Ascending aorta (tissue), 2 donors: ENCODE measurements at regions of chr16 and their contacts with region 1.

Region 1: GRCh38 chr16:2429034-2429770 is at the start of gene CCNF:
- DNase-seq: peak; percentile 88 to 98
- H3K4me3 ChIP-seq: peak within 1 kb of the TSS; percentile 57 to 93
- H3K27ac ChIP-seq: peak within 1 kb of the TSS; percentile 57 to 68
- H3K4me1 ChIP-seq: peaks cover 3 to 7% of the 10 kb centered on the region in 2 donors
- H3K27me3 ChIP-seq: no peaks in the 10 kb centered on the region
- CTCF ChIP-seq: peak in 1 of 3 experiments; percentile 38
- total RNA-seq, gene CCNF: 0.43 TPM

Region 2: GRCh38 chr16:2267913-2268666 is 161.1 kb before region 1 on chr16 and contains the start of gene RNPS1:
- intact Hi-C with region 1: loop called (anchors 10 kb)
- DNase-seq: peak; percentile 77 to 98
- H3K4me3 ChIP-seq: peak within 1 kb of the TSS; percentile 63 to 92
- H3K27ac ChIP-seq: peak within 1 kb of the TSS; percentile 95 to 98
- H3K4me1 ChIP-seq: peaks cover 10 to 21% of the 10 kb centered on the region in 2 donors
- H3K27me3 ChIP-seq: no peaks in the 10 kb centered on the region
- CTCF ChIP-seq: no peak
- total RNA-seq, gene RNPS1: 134 TPM

Region 3: GRCh38 chr16:2340564-2341455 is 88.4 kb before region 1 on chr16 and contains the start of gene ABCA3:
- intact Hi-C with region 1: loop called (anchors 1 kb)
- DNase-seq: peak; percentile 59 to 95
- H3K4me3 ChIP-seq: peak within 1 kb of the TSS; percentile 62 to 89
- H3K27ac ChIP-seq: peak within 1 kb of the TSS in 1 of 2 donors; percentile 32
- H3K4me1 ChIP-seq: peaks cover 0 to 11% of the 10 kb centered on the region in 2 donors
- H3K27me3 ChIP-seq: no peaks in the 10 kb centered on the region
- CTCF ChIP-seq: peak; percentile 99 to 100 (median 100)
- total RNA-seq, gene ABCA3: 25.9 TPM

Region 4: DNA sequence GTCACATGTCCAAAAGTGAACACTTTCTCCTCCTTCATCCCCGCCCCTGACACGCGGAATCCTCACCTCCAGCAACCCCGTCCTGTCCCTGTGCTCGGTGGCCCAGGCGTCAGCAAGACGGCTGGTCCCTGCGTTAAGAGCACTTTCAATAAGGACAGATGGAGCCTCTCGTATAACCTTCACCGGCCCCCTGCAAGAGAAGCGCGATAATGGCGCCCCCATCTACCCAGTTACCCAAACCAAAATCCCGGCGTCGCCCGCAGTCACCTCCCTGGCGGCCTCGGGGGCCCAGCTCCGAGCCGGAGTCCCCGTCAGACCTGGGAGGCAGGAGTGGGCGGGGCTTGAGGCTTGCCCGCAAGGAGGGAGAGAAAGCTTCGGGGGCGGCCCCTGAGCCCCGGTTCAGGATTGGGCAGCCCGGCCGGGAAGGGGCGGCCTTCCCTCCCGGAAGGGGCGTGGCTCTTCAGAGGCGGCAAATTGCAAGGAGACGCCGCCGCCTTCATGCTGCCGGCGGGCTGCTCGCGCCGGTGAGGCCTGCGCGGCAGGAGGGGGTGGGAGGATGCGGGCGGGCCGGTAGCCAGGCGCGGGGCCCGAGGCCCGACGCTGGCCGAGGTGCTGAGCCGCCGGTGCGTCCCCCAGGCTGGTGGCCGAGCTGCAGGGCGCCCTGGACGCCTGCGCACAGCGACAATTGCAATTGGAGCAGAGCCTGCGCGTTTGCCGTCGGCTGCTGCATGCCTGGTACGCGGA is 30.6 kb after region 1 on chr16 and contains the start of gene TEDC2:
- intact Hi-C with region 1: loop called (anchors 1 kb)
- DNase-seq: peak; percentile 79 to 98
- H3K4me3 ChIP-seq: peak within 1 kb of the TSS; percentile 61 to 67
- H3K27ac ChIP-seq: no peak within 1 kb of the TSS
- H3K4me1 ChIP-seq: peaks cover 0 to 8% of the 10 kb centered on the region in 2 donors
- H3K27me3 ChIP-seq: no peaks in the 10 kb centered on the region
- CTCF ChIP-seq: no peak
- total RNA-seq, gene TEDC2: not detected

Region 5: DNA sequence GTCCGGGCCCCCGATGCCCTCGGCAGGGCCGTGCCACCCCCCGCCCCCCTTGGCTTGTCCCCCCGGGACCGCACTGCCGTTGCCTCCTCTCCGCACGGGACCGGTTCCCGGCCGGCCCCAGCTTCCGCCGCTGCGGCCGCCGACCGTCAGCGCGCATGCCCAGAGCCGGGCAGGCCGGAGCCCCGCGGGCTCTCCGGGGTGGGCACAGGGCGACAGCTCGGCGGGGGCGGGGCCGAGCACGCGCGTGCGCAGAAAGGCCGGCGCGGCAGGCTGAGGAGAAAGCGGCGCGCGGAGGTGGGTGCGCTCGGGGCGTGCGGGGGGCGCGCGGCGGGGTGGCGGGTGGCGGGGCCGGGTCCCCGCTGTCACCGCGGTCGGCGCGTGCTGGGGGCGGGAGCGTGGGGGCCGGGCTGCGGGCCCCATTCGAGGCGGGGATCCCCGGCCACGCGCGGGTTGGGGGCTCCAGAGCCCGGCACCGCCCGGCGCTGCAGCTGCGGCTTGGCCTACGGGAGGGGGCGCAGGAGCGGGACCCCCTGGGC is 45.7 kb after region 1 on chr16 and contains the start of gene TBC1D24:
- intact Hi-C with region 1: loop called (anchors 1 kb)
- DNase-seq: peak; percentile 44 to 89
- H3K4me3 ChIP-seq: peak within 1 kb of the TSS; percentile 68 to 76
- H3K27ac ChIP-seq: peak within 1 kb of the TSS; percentile 52 to 79
- H3K4me1 ChIP-seq: peaks cover 21 to 26% of the 10 kb centered on the region in 2 donors
- H3K27me3 ChIP-seq: peaks cover 12% of the 10 kb centered on the region
- CTCF ChIP-seq: no peak
- total RNA-seq, gene TBC1D24: 22.5 TPM

Region 6: GRCh38 chr16:2500918-2501750 is 71.9 kb after region 1 on chr16:
- intact Hi-C with region 1: loop called (anchors 5 kb)
- DNase-seq: peak in 1 of 2 donors; percentile 89
- H3K4me3 ChIP-seq: peak overlapping the region in 1 of 2 donors; percentile 38
- H3K27ac ChIP-seq: no peak overlapping the region
- H3K4me1 ChIP-seq: peaks cover 12 to 30% of the 10 kb centered on the region in 2 donors
- H3K27me3 ChIP-seq: no peaks in the 10 kb centered on the region
- CTCF ChIP-seq: peak; percentile 94 to 99 (median 98)

Region 7: DNA sequence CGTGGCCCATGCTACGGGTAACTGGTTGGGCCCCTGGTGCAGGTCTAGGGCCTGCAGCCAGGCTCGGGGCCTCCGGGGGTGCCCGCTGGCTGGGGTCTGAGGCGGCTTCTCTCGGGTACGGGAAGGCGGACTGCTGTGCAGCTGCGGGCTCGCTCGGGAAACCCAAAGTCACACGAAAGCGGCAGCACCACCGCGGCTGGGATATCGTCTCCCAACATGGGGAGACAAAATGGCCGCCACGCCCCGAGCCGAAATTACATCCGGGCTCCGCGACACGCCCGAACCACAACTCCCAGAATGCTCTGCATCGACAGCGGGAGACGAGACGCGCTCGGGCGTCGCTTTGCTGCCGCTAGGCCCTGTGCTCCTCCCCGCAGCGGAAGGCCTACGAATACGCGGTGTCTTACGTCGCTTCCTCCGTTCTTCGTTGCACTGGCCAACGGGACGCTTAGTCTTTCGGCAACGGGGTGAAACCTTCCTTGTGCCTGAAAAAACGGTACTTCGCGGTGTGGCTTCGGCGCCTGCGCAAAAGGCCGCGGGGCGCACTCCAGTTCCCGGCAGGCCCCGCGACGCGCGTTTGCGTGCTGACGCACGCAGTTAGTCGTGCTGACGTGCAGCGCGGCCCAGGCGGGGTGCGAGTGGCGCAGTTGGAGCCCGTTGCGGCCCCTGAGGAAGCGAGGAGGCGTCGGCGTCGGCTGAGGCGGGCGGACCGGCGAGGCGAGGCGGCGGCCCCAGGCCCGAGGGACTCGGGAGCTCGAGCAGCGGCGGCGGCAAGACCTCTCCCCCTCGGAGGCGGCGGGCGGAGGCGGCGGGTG is 323.0 kb after region 1 on chr16 and contains the start of gene SRRM2:
- intact Hi-C with region 1: loop called (anchors 10 kb)
- DNase-seq: peak; percentile 67 to 97
- H3K4me3 ChIP-seq: peak within 1 kb of the TSS; percentile 86 to 96
- H3K27ac ChIP-seq: peak within 1 kb of the TSS; percentile 97 to 98
- H3K4me1 ChIP-seq: peaks cover 18 to 35% of the 10 kb centered on the region in 2 donors
- H3K27me3 ChIP-seq: no peaks in the 10 kb centered on the region
- CTCF ChIP-seq: no peak
- total RNA-seq, gene SRRM2: 359 TPM